PC-9 (cell line): ENCODE measurements at regions of chr12 and their contacts with region 1.

Region 1: DNA sequence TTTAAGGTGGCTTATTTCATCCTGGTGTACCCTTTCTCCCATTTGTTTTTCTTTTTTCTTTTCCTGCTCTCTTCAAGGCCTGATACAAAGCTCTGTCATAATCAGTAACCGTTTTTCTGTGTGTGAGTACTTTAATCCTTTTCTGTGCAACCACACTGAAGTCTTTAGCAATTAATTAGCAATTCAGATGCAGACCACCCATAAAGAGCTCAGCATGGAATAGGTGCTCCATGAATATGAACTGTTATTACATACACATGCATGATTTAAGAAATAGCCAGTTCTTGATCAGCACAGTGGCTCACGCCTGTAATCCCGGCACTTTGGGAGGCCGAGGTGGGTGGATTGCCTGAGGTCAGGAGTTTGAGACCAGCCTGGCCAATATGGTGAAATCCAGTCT is 1386.6 kb downstream of the AACS start:
- DNase-seq: no peak
- H3K4me3 ChIP-seq: no peak overlapping the region
- H3K27ac ChIP-seq: no peak overlapping the region
- H3K4me1 ChIP-seq: no peaks in the 10 kb centered on the region
- H3K27me3 ChIP-seq: no peaks in the 10 kb centered on the region
- CTCF ChIP-seq: no peak

Region 2: DNA sequence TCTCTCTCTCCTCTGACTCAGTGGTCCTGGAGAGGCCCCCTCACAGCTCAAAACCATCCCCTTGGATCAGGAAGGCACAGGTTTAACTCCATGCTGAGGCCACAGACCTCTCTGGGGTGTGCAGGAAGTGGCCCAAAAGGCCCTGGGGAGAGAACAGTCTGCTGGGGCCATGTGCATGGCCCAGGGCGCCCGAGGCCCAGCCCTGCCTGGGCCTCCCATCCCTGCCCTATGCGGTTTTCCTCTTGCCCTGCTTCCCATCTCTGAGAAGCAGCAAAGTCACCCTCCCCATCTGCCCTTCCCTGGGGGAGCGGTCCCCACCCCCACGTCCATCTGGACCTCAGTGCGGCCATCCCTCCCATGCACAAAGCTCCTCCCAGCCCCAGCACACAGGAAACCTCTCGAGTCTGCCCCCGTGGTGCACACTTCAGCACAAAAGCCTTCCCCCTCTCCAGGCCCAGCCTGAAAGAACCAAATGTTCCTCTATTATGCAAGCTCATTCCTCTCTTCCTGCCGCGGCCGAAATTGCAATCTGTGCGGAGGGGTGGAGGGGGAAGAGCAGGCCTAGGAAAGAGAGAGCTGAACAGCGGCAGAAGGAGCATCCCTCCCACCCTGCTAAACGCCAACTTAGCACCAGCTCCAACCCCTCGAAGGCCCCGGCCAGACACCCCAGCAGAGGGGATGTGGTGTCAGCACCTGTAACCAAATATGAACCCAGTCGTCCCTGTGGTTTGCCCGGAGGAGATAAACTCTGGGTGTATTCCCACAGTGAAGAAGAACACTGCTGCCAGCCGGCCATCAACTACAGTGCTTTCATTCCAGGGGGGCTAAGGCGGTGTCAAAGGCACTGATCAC is 1696.6 kb before region 1 on chr12:
- CTCF ChIA-PET with region 1: no interaction called
- POLR2A ChIA-PET with region 1: no interaction called
- intact Hi-C with region 1: no loop called
- DNase-seq: no peak
- H3K4me3 ChIP-seq: no peak overlapping the region
- H3K27ac ChIP-seq: no peak overlapping the region
- H3K4me1 ChIP-seq: no peaks in the 10 kb centered on the region
- H3K27me3 ChIP-seq: no peaks in the 10 kb centered on the region
- CTCF ChIP-seq: no peak

Region 3: GRCh38 chr12:125124318-125124966 is 1327.4 kb before region 1 on chr12:
- CTCF ChIA-PET with region 1: no interaction called
- POLR2A ChIA-PET with region 1: no interaction called
- intact Hi-C with region 1: no loop called
- DNase-seq: peak; percentile 29 to 81
- H3K4me3 ChIP-seq: no peak overlapping the region
- H3K27ac ChIP-seq: peak overlapping the region; percentile 84
- H3K4me1 ChIP-seq: peaks cover 31% of the 10 kb centered on the region
- H3K27me3 ChIP-seq: no peaks in the 10 kb centered on the region
- CTCF ChIP-seq: no peak

Region 4: GRCh38 chr12:126432780-126433179 is 19.0 kb before region 1 on chr12:
- CTCF ChIA-PET with region 1: no interaction called
- POLR2A ChIA-PET with region 1: no interaction called
- intact Hi-C with region 1: loop called (anchors 2 kb)
- DNase-seq: no peak
- H3K4me3 ChIP-seq: no peak overlapping the region
- H3K27ac ChIP-seq: no peak overlapping the region
- H3K4me1 ChIP-seq: no peaks in the 10 kb centered on the region
- H3K27me3 ChIP-seq: no peaks in the 10 kb centered on the region
- CTCF ChIP-seq: no peak

Region 5: GRCh38 chr12:126547905-126548304 is 96.1 kb after region 1 on chr12:
- CTCF ChIA-PET with region 1: no interaction called
- POLR2A ChIA-PET with region 1: no interaction called
- intact Hi-C with region 1: no loop called
- DNase-seq: no peak
- H3K4me3 ChIP-seq: no peak overlapping the region
- H3K27ac ChIP-seq: no peak overlapping the region
- H3K4me1 ChIP-seq: no peaks in the 10 kb centered on the region
- H3K27me3 ChIP-seq: no peaks in the 10 kb centered on the region
- CTCF ChIP-seq: no peak